Tibial artery (tissue), 4 donors: ENCODE measurements at regions of chr14 and their contacts with region 1.

Region 1: GRCh38 chr14:60561845-60562746 is 53.1 kb downstream of the SIX6 start:
- DNase-seq: peak in 1 of 2 donors; percentile 60
- H3K4me3 ChIP-seq: no peak overlapping the region
- H3K27ac ChIP-seq: no peak overlapping the region
- H3K4me1 ChIP-seq: peaks cover 0 to 25% (median 5%) of the 10 kb centered on the region in 4 donors
- H3K27me3 ChIP-seq: no peaks in the 10 kb centered on the region
- CTCF ChIP-seq: peak; percentile 47 to 55

Region 2: GRCh38 chr14:60349663-60350365 is 212.3 kb before region 1 on chr14:
- intact Hi-C with region 1: loop called (anchors 5 kb)
- DNase-seq: peak in 1 of 2 donors; percentile 30
- H3K4me3 ChIP-seq: no peak overlapping the region
- H3K27ac ChIP-seq: no peak overlapping the region
- H3K4me1 ChIP-seq: peaks cover 0 to 5% (median 2%) of the 10 kb centered on the region in 4 donors
- H3K27me3 ChIP-seq: no peaks in the 10 kb centered on the region
- CTCF ChIP-seq: peak; percentile 53 to 60